A673 (cell line): ENCODE measurements at regions of chr1 and their contacts with region 1.

Region 1: DNA sequence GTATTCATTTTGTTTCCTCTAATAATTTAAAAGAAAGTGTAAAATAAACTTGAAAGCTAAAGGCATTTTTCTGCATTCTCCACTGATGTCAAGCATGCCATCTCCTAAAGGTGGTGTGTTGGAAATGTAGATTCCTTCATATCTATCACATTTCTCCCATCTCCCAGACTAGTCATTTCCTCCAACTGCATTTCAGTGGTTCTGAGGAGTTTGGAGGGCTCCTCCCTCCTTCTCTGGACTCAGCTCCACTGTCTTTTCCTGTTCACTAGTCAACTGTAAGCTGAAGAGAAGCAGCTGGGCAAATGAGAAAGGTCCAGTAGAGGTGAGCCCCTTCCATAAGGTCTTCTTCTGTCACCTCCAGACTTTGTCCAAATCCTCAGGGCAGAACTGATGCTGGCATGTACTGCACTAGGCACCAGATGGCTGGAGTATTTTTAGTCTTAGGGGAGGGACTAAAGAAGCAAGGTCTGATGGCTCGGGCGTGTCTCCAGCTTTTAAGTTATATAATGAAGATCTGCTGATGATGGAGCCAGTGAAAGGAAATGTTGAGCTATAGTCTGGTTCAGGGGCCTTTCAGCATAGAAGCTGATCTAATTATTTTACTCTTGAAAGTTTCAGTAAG is 186.1 kb downstream of the NTNG1 start:
- DNase-seq: no peak
- H3K4me3 ChIP-seq: no peak overlapping the region
- H3K27ac ChIP-seq: no peak overlapping the region
- H3K4me1 ChIP-seq: peaks cover 19% of the 10 kb centered on the region
- H3K27me3 ChIP-seq: no peaks in the 10 kb centered on the region
- CTCF ChIP-seq: no peak

Region 2: DNA sequence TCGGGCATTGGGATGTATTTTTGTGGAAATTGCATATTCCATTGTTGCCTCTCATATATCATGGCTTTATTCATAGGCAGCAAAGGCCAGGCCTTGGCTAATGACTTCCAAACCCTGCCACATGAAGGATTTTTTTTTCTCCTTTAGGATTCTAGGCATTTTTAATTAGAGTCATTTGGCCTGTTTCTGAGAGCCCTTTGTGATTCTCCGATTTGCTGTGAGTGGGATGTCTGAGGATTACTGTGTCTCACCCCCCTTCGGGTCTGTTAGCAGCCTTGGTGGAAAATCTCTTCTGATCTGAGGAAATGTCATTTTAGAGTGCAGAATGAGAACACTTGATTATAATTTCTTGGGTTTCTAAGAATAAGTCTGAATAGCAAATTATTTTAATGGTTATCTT is 67.4 kb after region 1 on chr1:
- CTCF ChIA-PET with region 1: no interaction called
- POLR2A ChIA-PET with region 1: interaction called, 11 read pairs
- intact Hi-C with region 1: no loop called
- DNase-seq: no peak
- H3K4me3 ChIP-seq: no peak overlapping the region
- H3K27ac ChIP-seq: no peak overlapping the region
- H3K4me1 ChIP-seq: peaks cover 17% of the 10 kb centered on the region
- H3K27me3 ChIP-seq: no peaks in the 10 kb centered on the region
- CTCF ChIP-seq: no peak

Region 3: GRCh38 chr1:107525146-107525545 is 198.2 kb after region 1 on chr1:
- CTCF ChIA-PET with region 1: no interaction called
- POLR2A ChIA-PET with region 1: no interaction called
- intact Hi-C with region 1: no loop called
- DNase-seq: peak; percentile 44
- H3K4me3 ChIP-seq: no peak overlapping the region
- H3K27ac ChIP-seq: no peak overlapping the region
- H3K4me1 ChIP-seq: peaks cover 17% of the 10 kb centered on the region
- H3K27me3 ChIP-seq: no peaks in the 10 kb centered on the region
- CTCF ChIP-seq: no peak